ENCODE measurements at regions of chr10 and their contacts with region 1.

Region 1: DNA sequence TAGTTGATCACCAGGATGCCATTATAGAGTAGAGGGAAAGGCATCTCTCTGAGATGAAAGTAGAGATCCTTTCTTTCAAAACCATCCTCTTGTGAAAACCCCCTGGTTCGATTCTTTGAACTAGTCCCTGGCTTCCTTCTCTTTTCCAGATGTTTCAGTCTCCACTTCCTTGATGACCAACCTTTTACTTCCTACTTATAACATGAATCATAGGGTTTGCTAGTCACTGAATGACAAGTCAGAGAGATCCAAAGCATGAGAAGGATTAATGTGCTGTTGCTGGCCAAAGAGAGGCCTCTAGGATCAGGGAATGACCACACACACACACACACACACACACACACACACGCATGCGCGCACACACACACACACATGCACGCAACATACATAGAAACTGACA is 161.1 kb upstream of the FRMD4A start:
- DNase-seq: no peak
- ATAC-seq: no peak
- H3K4me3 ChIP-seq: no peak overlapping the region
- H3K27ac ChIP-seq: no peak overlapping the region
- H3K4me1 ChIP-seq: no peaks in the 10 kb centered on the region
- H3K27me3 ChIP-seq: peaks cover under 1 to 6% (median 2%) of the 10 kb centered on the region in 3 donors
- CTCF ChIP-seq: no peak
- POLR2A ChIP-seq: no peak

Region 2: GRCh38 chr10:14358886-14359573 is 132.8 kb before region 1 on chr10:
- in situ Hi-C with region 1: no loop called
- intact Hi-C with region 1: no loop called
- DNase-seq: no peak
- ATAC-seq: no peak
- H3K4me3 ChIP-seq: no peak overlapping the region
- H3K27ac ChIP-seq: no peak overlapping the region
- H3K4me1 ChIP-seq: no peaks in the 10 kb centered on the region
- H3K27me3 ChIP-seq: no peaks in the 10 kb centered on the region
- CTCF ChIP-seq: no peak
- POLR2A ChIP-seq: no peak

Region 3: DNA sequence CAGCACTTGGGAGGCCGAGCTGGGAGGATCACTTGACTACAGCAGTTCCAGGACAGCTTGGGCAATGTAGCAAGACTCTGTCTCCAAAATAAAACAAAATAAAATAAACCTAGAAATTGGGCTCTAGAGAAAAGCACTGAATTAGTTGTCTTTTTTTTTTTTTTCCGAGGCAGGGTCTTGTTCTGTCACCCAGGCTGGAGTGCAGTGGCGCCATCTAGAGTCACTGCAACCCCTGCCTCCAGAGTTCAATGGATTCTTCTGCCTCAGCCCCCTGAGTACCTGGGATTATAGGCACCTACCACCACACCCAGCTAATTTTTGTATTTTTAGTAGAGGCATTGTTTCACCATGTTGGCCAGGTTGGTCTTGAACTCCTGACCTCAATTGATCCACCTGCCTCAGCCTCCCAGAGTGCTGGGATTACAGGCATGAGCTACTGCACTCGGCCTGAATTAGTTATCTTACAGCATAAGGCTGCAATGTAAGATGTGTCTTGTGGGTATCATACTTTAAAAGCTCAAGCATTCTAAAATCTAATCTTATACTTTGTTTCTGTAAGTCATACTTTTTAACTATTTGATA is 480.2 kb after region 1 on chr10:
- in situ Hi-C with region 1: no loop called
- intact Hi-C with region 1: loop called (anchors 10 kb)
- DNase-seq: no peak
- ATAC-seq: no peak
- H3K4me3 ChIP-seq: no peak overlapping the region
- H3K27ac ChIP-seq: no peak overlapping the region
- H3K4me1 ChIP-seq: no peaks in the 10 kb centered on the region
- H3K27me3 ChIP-seq: peaks cover 0 to 5% (median 3%) of the 10 kb centered on the region in 3 donors
- CTCF ChIP-seq: peak in 3 of 5 experiments; percentile 15 to 61 (median 27)
- POLR2A ChIP-seq: no peak

Measured in gastrocnemius medialis (tissue), 4 donors.